Endothelial cell of umbilical vein (primary cell): ENCODE measurements at regions of chr2 and their contacts with region 1.

Region 1: DNA sequence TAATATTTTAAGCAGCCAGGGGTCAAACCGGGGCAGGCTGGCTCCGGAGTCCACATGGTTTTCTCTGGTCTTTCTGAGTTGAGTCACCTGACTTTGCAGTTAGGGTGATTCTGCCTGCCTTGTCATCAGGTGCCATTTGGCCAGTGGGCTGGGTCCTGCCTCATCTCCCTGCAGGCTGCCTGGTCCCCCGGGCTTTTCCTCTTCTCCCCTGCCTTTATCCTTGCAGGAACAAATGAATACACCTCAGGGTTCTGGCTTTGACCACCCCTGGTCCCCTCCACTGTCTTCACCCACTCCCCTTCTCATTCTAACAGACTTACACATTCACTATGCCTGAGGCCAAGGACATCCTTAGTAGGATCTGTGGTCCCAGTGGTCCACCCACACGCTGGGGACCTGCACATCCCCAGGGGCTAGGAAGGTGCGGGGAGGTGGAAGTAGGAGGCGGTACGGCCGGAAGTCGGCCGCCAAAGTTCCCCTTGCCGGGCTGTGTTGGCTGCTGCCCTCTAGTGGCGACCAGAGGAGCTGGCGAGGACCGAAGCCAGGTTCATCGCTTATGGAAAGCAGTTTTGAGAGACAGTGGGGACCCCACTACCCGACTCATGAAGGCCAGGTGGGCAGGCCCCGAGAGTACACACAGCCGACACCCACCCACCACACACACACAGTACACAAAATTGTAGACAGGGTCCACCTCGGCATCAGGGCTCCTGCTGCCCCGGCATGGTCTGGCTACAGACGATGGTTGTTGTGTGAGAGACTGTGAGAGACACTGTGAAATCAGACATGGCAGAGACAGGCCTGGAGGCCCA is 6.3 kb upstream of the TEX261 start:
- DNase-seq: peak; percentile 43
- H3K4me3 ChIP-seq: no peak overlapping the region
- H3K27ac ChIP-seq: no peak overlapping the region
- H3K4me1 ChIP-seq: no peaks in the 10 kb centered on the region
- H3K27me3 ChIP-seq: peaks cover 4 to 5% of the 10 kb centered on the region in 2 experiments
- CTCF ChIP-seq: peak; percentile 95 to 97
- POLR2A ChIP-seq: no peak

Region 2: DNA sequence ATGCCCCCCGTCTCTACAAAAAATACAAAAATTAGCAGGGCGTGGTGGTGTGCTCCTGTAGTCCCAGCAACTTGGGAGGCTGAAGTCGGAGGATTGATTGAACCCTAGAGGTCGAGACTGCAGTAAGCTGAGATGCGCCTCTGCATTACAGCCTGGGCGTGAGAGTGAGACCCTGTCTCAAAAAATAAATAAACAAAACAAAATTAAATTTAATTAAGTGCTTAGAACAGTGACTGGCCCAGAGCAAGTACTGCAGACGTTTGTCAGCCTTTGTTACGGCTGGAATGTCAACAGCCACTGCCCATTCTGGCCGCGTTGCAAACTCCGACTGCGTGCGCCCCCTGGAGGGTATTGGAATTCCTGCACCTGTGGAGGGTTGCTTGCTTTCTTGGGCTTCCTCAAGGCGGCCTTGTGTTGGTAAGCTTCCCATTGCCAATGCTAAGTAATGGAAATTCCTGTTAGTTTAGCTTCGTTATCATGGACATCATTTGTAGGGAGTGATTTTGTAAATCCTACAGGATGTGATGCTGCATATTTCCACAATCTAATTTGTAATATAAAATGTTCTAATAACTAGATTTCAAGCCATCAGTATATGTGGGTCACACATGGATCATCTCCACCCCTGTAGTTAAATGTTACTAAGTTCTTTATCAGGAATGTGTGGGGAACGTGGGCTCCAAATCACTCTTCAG is 81.2 kb before region 1 on chr2:
- CTCF ChIA-PET with region 1: no interaction called
- POLR2A ChIA-PET with region 1: no interaction called
- dilution Hi-C with region 1: no loop called
- intact Hi-C with region 1: no loop called
- DNase-seq: peak; percentile 88
- H3K4me3 ChIP-seq: no peak overlapping the region
- H3K27ac ChIP-seq: no peak overlapping the region
- H3K4me1 ChIP-seq: peaks cover 16% of the 10 kb centered on the region
- H3K27me3 ChIP-seq: peaks cover 8 to 10% of the 10 kb centered on the region in 2 experiments
- CTCF ChIP-seq: peak; percentile 93 to 96
- POLR2A ChIP-seq: no peak

Region 3: GRCh38 chr2:70984576-70985282 is 16.3 kb before region 1 on chr2:
- CTCF ChIA-PET with region 1: interaction called, 43 read pairs
- POLR2A ChIA-PET with region 1: no interaction called
- dilution Hi-C with region 1: no loop called
- intact Hi-C with region 1: no loop called
- DNase-seq: peak; percentile 58
- H3K4me3 ChIP-seq: no peak overlapping the region
- H3K27ac ChIP-seq: no peak overlapping the region
- H3K4me1 ChIP-seq: no peaks in the 10 kb centered on the region
- H3K27me3 ChIP-seq: no peaks in the 10 kb centered on the region
- CTCF ChIP-seq: peak; percentile 94 to 96
- POLR2A ChIP-seq: no peak